Dorsolateral prefrontal cortex (tissue), 120 donors: ENCODE measurements at regions of chr2 and their contacts with region 1.

Region 1: DNA sequence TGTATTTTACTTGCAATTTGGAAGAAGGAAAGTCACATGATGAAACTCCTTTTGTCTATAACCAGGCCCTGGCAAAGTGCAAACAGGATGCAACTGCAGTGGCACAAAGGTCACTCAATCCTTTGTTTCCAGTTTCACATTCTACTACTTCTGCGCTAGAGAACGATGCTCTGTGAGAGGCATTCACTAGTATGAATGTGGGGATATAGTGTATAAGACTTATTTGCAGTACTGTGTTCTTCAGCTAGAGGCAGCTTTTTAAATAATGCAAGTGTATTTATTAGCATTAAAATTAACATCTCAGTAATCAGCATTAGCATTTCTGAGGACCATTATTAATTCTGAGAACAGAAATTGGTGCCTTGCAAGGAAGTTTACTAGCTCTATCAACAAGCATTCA is 68.9 kb downstream of the PRPF40A start:
- DNase-seq: no peak
- H3K4me3 ChIP-seq: peak overlapping the region in 1 of 59 donors; percentile 10
- H3K27ac ChIP-seq: peak overlapping the region in 51 of 59 donors; percentile 0 to 79 (median 59)
- H3K27me3 ChIP-seq: no peaks in the 10 kb centered on the region
- CTCF ChIP-seq: peak in 49 of 56 donors; percentile 14 to 61 (median 42)

Region 2: GRCh38 chr2:152611458-152612231 is 36.7 kb before region 1 on chr2:
- intact Hi-C with region 1: loop called in 1 of 2 experiments (anchors 1 kb)
- DNase-seq: no peak
- H3K4me3 ChIP-seq: no peak overlapping the region
- H3K27ac ChIP-seq: peak overlapping the region in 58 of 59 donors; percentile 17 to 88 (median 73)
- H3K27me3 ChIP-seq: no peaks in the 10 kb centered on the region
- CTCF ChIP-seq: no peak

Region 3: GRCh38 chr2:152717228-152718075 is 69.1 kb after region 1 on chr2 and contains the start of gene PRPF40A:
- intact Hi-C with region 1: loop called in 1 of 2 experiments (anchors 10 kb)
- DNase-seq: peak; percentile 99 to 100 (median 99)
- H3K4me3 ChIP-seq: peak within 1 kb of the TSS; percentile 71 to 99 (median 93)
- H3K27ac ChIP-seq: peak within 1 kb of the TSS; percentile 87 to 100 (median 99)
- H3K27me3 ChIP-seq: no peaks in the 10 kb centered on the region
- CTCF ChIP-seq: peak in 15 of 56 donors; percentile 5 to 40 (median 17)
- total RNA-seq, gene PRPF40A: 35.0 to 69.8 (median 50.7) TPM